T-cell (primary cell): ENCODE measurements at regions of chr7 and their contacts with region 1.

Region 1: DNA sequence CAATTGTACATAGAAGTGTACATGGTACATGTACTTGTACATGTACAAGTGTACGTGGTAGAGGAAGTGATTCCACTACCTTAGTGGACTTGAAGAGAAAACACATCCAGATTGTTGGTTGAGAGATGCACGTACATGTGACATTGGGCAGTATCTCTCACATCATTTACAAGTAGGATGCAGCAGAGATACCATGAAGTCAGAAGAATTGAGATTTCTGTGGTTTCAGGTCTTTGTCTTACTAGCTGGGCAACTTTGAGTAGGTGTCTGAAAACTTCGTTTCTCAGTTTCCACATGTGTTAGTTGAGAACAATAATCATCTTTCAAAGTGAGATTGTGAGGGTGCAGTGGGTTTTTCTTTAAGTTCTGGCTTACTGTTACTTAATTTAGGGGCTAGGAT is 21.5 kb downstream of the CLDN12 start:
- DNase-seq: no peak
- ATAC-seq: no peak
- H3K4me3 ChIP-seq: no peak overlapping the region
- H3K4me3 Mint-ChIP-seq: no peak overlapping the region
- H3K27ac ChIP-seq: no peak overlapping the region
- H3K27ac Mint-ChIP-seq: no peak overlapping the region
- H3K4me1 ChIP-seq: no peaks in the 10 kb centered on the region
- H3K4me1 Mint-ChIP-seq: peaks cover 0 to 11% (median 7%) of the 10 kb centered on the region in 3 donors
- H3K27me3 ChIP-seq: no peaks in the 10 kb centered on the region
- H3K27me3 Mint-ChIP-seq: peaks cover 0 to 4% of the 10 kb centered on the region in 2 donors

Region 2: DNA sequence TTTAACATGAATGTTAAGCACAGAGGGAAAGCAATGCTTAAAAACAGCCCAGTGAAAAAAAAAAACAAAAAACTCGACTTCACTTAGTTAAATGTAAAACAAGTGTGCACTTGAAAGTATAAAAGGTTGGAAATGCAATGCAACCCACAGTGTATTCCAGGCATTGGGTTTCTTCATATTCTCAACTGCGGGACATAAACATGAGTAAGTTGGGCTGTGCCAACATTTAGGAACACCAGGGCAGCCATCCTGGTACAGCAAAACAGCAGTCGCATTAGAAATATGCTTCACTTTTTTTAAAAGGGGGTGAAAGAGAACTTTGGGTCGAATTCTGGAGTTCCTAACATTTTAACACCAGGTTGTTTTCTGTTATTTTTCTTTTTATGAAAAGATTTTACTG is 269.5 kb before region 1 on chr7:
- CTCF ChIA-PET with region 1: interaction called, 30 to 69 read pairs
- POLR2A ChIA-PET with region 1: interaction called in 1 of 2 experiments, 11 read pairs
- DNase-seq: no peak
- ATAC-seq: no peak
- H3K4me3 ChIP-seq: no peak overlapping the region
- H3K4me3 Mint-ChIP-seq: peak overlapping the region in 1 of 3 donors; percentile 68
- H3K27ac ChIP-seq: no peak overlapping the region
- H3K27ac Mint-ChIP-seq: no peak overlapping the region
- H3K4me1 ChIP-seq: peaks cover 2 to 9% of the 10 kb centered on the region in 2 experiments
- H3K4me1 Mint-ChIP-seq: peaks cover 4 to 5% (median 4%) of the 10 kb centered on the region in 3 donors
- H3K27me3 ChIP-seq: peaks cover 0 to 8% of the 10 kb centered on the region in 2 experiments
- H3K27me3 Mint-ChIP-seq: peaks cover 18 to 25% of the 10 kb centered on the region in 2 donors

Region 3: GRCh38 chr7:90312745-90313144 is 112.0 kb before region 1 on chr7:
- CTCF ChIA-PET with region 1: interaction called, 12 to 22 read pairs
- POLR2A ChIA-PET with region 1: no interaction called
- DNase-seq: peak in 1 of 35 experiments; percentile 29
- ATAC-seq: no peak
- H3K4me3 ChIP-seq: no peak overlapping the region
- H3K4me3 Mint-ChIP-seq: no peak overlapping the region
- H3K27ac ChIP-seq: no peak overlapping the region
- H3K27ac Mint-ChIP-seq: no peak overlapping the region
- H3K4me1 ChIP-seq: no peaks in the 10 kb centered on the region
- H3K4me1 Mint-ChIP-seq: no peaks in the 10 kb centered on the region
- H3K27me3 ChIP-seq: peaks cover 0 to 3% of the 10 kb centered on the region in 2 experiments
- H3K27me3 Mint-ChIP-seq: peaks cover 21 to 24% of the 10 kb centered on the region in 2 donors

Region 4: GRCh38 chr7:90403174-90404113 is 21.3 kb before region 1 on chr7 and contains the start of gene CLDN12:
- CTCF ChIA-PET with region 1: interaction called in 1 of 2 experiments, 14 read pairs
- POLR2A ChIA-PET with region 1: no interaction called
- DNase-seq: peak; percentile 13 to 89 (median 77)
- ATAC-seq: peak; percentile 91 to 98 (median 96)
- H3K4me3 ChIP-seq: peak within 1 kb of the TSS; percentile 89 to 99
- H3K4me3 Mint-ChIP-seq: peak within 1 kb of the TSS; percentile 89 to 96 (median 96)
- H3K27ac ChIP-seq: peak within 1 kb of the TSS; percentile 75
- H3K27ac Mint-ChIP-seq: peak within 1 kb of the TSS; percentile 79 to 88
- H3K4me1 ChIP-seq: peaks cover 9 to 12% of the 10 kb centered on the region in 2 experiments
- H3K4me1 Mint-ChIP-seq: peaks cover 14 to 22% (median 17%) of the 10 kb centered on the region in 3 donors
- H3K27me3 ChIP-seq: no peaks in the 10 kb centered on the region
- H3K27me3 Mint-ChIP-seq: peaks cover 0 to 1% of the 10 kb centered on the region in 2 donors
- total RNA-seq, gene CLDN12: 1.8 to 3.7 (median 2.3) TPM